Mammary epithelial cell (primary cell): ENCODE measurements at regions of chr5 and their contacts with region 1.

Region 1: GRCh38 chr5:113330533-113331208 is 104.1 kb downstream of the TSSK1B start:
- DNase-seq: peak; percentile 50
- H3K4me3 ChIP-seq: no peak overlapping the region
- H3K27ac ChIP-seq: peak overlapping the region; percentile 25
- H3K4me1 ChIP-seq: peaks cover 12% of the 10 kb centered on the region
- H3K27me3 ChIP-seq: no peaks in the 10 kb centered on the region
- CTCF ChIP-seq: peak; percentile 38 to 56

Region 2: DNA sequence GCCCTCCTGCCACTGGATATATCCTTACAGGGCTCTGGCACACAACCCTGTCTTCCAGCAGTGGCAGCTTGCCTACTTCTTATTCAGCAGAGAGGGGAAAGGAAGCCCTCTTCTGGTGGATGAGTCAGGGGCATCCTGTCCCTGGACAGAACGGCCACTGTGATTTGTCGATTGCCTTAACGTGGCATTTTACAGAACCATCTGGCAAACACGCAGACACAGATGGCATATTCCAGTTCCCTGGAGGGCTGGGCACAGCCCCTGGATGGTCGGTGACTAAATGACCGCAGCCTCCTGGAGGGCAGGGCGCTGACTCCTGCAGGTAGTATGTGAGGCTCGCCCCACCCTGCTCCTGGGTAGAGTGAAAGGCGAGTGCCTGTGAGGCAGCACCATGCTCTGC is 292.0 kb before region 1 on chr5:
- CTCF ChIA-PET with region 1: no interaction called
- dilution Hi-C with region 1: no loop called
- in situ Hi-C with region 1: no loop called
- intact Hi-C with region 1: loop called (anchors 5 kb)
- DNase-seq: peak; percentile 91
- H3K4me3 ChIP-seq: no peak overlapping the region
- H3K27ac ChIP-seq: peak overlapping the region; percentile 73
- H3K4me1 ChIP-seq: peaks cover 16% of the 10 kb centered on the region
- H3K27me3 ChIP-seq: no peaks in the 10 kb centered on the region
- CTCF ChIP-seq: peak in 1 of 2 donors; percentile 26

Region 3: DNA sequence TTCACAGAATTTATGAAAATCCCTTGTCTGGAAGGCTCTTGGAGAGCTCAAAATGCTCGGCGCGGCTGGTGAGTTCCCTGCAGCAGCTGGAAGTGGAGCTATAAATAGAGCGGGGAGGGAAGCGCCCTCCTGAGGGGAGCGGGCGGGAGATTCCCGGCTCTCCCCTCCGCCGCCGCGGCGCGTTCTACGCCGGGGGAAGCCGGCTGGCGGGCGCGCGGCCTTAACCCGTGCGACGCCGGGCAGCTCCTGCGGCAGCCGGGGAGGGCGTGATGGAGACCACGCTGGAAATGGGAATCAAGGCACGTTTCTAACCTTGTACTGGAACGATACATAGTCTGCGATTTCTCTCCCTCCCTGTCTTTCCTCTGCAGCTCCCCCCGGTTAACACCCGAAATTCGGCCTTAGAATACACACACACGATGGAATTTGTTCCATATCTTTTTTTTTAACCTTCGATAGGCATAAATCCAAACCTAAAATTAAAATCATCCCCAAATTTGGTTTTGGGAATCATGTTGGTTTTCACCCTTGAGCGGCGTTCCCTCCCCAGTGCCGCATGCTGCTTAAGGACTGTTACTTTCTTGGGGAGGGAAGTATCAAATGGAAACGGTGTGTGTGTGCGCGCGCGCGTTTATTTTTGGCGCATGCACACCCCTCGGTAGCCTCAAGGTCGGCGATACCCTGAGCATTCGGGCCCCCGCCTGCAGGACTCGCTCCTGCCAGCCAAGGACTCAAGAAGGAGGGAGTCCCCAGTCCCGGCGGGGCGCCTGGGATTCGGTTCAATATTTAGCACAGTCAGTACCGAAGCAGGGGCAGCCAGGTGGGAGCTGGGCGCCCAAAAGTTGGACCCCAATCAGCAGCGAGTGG is 724.9 kb after region 1 on chr5:
- CTCF ChIA-PET with region 1: no interaction called
- dilution Hi-C with region 1: no loop called
- in situ Hi-C with region 1: no loop called
- intact Hi-C with region 1: no loop called
- DNase-seq: no peak
- H3K4me3 ChIP-seq: no peak overlapping the region
- H3K27ac ChIP-seq: no peak overlapping the region
- H3K4me1 ChIP-seq: peaks cover 4% of the 10 kb centered on the region
- H3K27me3 ChIP-seq: peaks cover 24% of the 10 kb centered on the region
- CTCF ChIP-seq: no peak